A549 (cell line): ENCODE measurements at regions of chr20 and their contacts with region 1.

Region 1: GRCh38 chr20:54103067-54103761 is 32.8 kb upstream of the BCAS1 start:
- DNase-seq: peak in 1 of 2 experiments; percentile 90
- ATAC-seq: peak; percentile 58 to 66; a peak in 4 of 6 replicates
- H3K4me3 ChIP-seq: no peak overlapping the region
- H3K27ac ChIP-seq: peak overlapping the region; percentile 92 to 98
- H3K4me1 ChIP-seq: peaks cover 65% of the 10 kb centered on the region
- CTCF ChIP-seq: peak; percentile 86
- EP300 ChIP-seq: no peak
- POLR2A ChIP-seq: no peak
- RAD21 ChIP-seq: peak; percentile 76 to 81

Region 2: GRCh38 chr20:53960579-53961272 is 142.5 kb before region 1 on chr20:
- CTCF ChIA-PET with region 1: no interaction called
- POLR2A ChIA-PET with region 1: no interaction called
- DNase-seq: no peak
- ATAC-seq: no peak
- H3K4me3 ChIP-seq: no peak overlapping the region
- H3K27ac ChIP-seq: no peak overlapping the region
- H3K4me1 ChIP-seq: peaks cover 7% of the 10 kb centered on the region; the same call in 2 of the 3 replicates
- CTCF ChIP-seq: no peak
- EP300 ChIP-seq: no peak
- POLR2A ChIP-seq: no peak
- RAD21 ChIP-seq: no peak

Region 3: DNA sequence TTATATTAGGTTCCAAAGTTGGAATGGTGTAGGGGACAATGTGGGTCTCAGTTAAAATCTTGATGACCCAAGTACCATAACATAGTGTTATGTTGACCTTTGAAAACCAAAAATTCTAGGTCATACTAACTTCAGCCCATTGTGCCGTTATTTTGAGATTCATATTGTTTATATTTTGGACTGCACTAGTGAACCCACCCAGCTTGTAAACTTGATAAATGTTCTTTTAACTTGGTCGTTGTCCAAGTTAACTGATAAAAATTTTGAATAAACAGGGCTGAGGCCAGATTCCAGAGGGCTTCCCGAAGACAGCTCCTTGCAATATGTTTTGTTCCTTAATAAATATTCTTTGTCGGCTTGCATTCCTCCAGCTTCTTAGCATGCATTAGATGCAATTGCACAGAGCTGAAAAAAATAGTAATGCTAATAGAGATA is 123.2 kb before region 1 on chr20:
- CTCF ChIA-PET with region 1: no interaction called
- POLR2A ChIA-PET with region 1: no interaction called
- DNase-seq: no peak
- ATAC-seq: no peak
- H3K4me3 ChIP-seq: no peak overlapping the region
- H3K27ac ChIP-seq: no peak overlapping the region
- H3K4me1 ChIP-seq: no peaks in the 10 kb centered on the region
- CTCF ChIP-seq: no peak
- EP300 ChIP-seq: no peak
- POLR2A ChIP-seq: no peak
- RAD21 ChIP-seq: no peak

Region 4: DNA sequence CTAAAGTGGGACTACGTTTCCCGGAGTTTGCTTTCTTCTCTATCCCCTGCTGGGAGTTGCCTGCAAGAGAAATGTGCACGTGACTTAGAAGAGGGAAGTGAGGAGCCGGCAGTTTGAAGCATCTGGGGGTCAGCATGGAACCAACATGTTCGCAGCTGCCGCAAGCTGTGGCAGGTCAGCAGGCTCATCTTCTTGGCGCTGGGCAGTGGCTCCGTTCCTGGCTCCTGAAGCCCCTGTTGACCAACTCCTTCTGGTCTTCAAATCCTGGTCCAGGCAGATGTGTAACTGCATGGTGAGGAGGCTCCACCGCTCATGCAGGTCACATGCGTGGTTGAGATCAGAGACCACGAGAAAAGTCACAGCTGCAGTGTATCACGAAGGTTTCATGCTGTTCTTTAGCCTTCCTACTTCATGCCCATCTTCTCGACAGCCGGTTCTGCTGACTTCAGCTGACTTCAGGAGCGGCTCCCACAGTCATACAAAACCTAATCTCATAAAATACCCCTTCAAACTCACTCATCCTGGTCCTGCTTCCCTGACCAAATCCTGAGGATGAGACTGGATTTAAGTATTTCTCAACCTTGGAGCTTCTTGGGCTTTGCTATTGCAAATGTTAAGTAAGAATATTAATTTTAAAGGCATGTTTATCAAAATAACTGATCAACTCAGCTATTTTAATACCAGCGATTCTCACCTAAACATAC is 12.1 kb after region 1 on chr20:
- CTCF ChIA-PET with region 1: interaction called, 47 read pairs
- POLR2A ChIA-PET with region 1: interaction called, 3 read pairs
- DNase-seq: peak; percentile 77 to 92
- ATAC-seq: peak; percentile 84 to 88
- H3K4me3 ChIP-seq: no peak overlapping the region
- H3K27ac ChIP-seq: peak overlapping the region; percentile 94 to 98
- H3K4me1 ChIP-seq: peaks cover 76% of the 10 kb centered on the region
- CTCF ChIP-seq: no peak
- EP300 ChIP-seq: no peak
- POLR2A ChIP-seq: no peak
- RAD21 ChIP-seq: no peak

Region 5: GRCh38 chr20:54132612-54133433 is 29.6 kb after region 1 on chr20:
- CTCF ChIA-PET with region 1: interaction called, 25 read pairs
- POLR2A ChIA-PET with region 1: no interaction called
- DNase-seq: peak; percentile 70 to 96
- ATAC-seq: peak; percentile 83 to 93
- H3K4me3 ChIP-seq: no peak overlapping the region
- H3K27ac ChIP-seq: peak overlapping the region; percentile 87 to 96
- H3K4me1 ChIP-seq: peaks cover 49% of the 10 kb centered on the region
- CTCF ChIP-seq: no peak
- EP300 ChIP-seq: peak; percentile 98
- POLR2A ChIP-seq: no peak
- RAD21 ChIP-seq: peak in 1 of 2 experiments; percentile 47; a peak in 4 of 5 replicates

Region 6: GRCh38 chr20:54148947-54149503 is 45.8 kb after region 1 on chr20:
- CTCF ChIA-PET with region 1: interaction called, 11 read pairs
- POLR2A ChIA-PET with region 1: interaction called, 24 read pairs
- DNase-seq: peak; percentile 88 to 99
- ATAC-seq: peak; percentile 52 to 67
- H3K4me3 ChIP-seq: no peak overlapping the region
- H3K27ac ChIP-seq: peak overlapping the region; percentile 86 to 93
- H3K4me1 ChIP-seq: peaks cover 80% of the 10 kb centered on the region
- CTCF ChIP-seq: no peak
- EP300 ChIP-seq: peak; percentile 80 to 89; a peak in 4 of 5 replicates
- POLR2A ChIP-seq: no peak
- RAD21 ChIP-seq: peak in 1 of 2 experiments; percentile 43; a peak in 2 of 5 replicates

Region 7: GRCh38 chr20:54167909-54168872 is 65.0 kb after region 1 on chr20:
- CTCF ChIA-PET with region 1: interaction called, 37 read pairs
- POLR2A ChIA-PET with region 1: interaction called, 4 read pairs
- DNase-seq: peak; percentile 57 to 92
- ATAC-seq: peak; percentile 40 to 75
- H3K4me3 ChIP-seq: peak overlapping the region; percentile 83
- H3K27ac ChIP-seq: peak overlapping the region; percentile 93 to 100
- H3K4me1 ChIP-seq: peaks cover 55% of the 10 kb centered on the region
- CTCF ChIP-seq: no peak
- EP300 ChIP-seq: no peak
- POLR2A ChIP-seq: peak; percentile 21; the same call in 1 of the 2 replicates
- RAD21 ChIP-seq: no peak

Region 8: DNA sequence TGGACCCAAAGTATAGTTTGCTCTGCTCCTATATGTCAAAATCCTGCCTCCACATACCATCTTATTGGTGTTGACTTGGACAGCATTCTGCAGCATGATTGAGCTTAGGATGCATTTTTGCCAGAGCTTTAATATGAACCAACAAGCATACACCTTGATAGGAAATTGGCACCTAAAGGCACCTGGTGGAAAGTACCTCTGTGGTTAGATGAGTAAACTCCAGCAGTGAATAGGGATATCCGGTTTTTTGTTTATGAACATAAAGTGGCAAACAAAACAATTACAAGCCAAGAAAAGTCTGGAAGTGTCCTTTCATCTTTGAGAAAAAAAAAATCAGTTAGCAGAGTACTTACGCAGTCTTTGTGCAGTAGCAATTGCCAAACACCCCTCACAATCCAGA is 76.7 kb after region 1 on chr20:
- CTCF ChIA-PET with region 1: interaction called, 11 read pairs
- POLR2A ChIA-PET with region 1: interaction called, 5 read pairs
- DNase-seq: no peak
- ATAC-seq: no peak
- H3K4me3 ChIP-seq: no peak overlapping the region
- H3K27ac ChIP-seq: peak overlapping the region in 1 of 2 experiments; percentile 42; a peak in 4 of 6 replicates
- H3K4me1 ChIP-seq: peaks cover 51% of the 10 kb centered on the region
- CTCF ChIP-seq: no peak
- EP300 ChIP-seq: no peak
- POLR2A ChIP-seq: no peak
- RAD21 ChIP-seq: no peak